IMR-90 (cell line): ENCODE measurements at regions of chr18 and their contacts with region 1.

Region 1: DNA sequence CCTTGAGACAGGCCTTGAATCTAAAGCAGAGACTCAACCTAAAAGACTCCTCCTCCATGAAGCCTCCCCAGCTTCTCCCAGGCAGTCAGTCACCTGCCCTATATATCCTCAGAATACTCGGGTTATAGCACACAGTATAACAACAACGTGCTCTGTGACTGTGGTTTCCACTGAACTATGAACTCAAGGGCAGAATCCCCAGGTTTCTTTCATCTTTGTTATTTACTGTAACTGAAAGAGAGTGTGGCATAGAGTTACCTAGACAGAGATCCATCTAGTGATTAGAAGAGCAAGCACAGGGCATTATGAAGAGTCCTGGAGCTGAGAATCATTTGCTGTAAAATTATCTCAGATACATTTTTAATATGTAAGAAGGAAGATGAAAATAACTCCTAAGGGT is 281.6 kb upstream of the ZNF521 start:
- DNase-seq: no peak
- ATAC-seq: no peak
- H3K4me3 ChIP-seq: no peak overlapping the region
- H3K27ac ChIP-seq: no peak overlapping the region
- H3K4me1 ChIP-seq: no peaks in the 10 kb centered on the region
- H3K27me3 ChIP-seq: no peaks in the 10 kb centered on the region; the same call in 1 of the 2 replicates
- CTCF ChIP-seq: no peak
- POLR2A ChIP-seq: no peak
- RAD21 ChIP-seq: no peak

Region 2: DNA sequence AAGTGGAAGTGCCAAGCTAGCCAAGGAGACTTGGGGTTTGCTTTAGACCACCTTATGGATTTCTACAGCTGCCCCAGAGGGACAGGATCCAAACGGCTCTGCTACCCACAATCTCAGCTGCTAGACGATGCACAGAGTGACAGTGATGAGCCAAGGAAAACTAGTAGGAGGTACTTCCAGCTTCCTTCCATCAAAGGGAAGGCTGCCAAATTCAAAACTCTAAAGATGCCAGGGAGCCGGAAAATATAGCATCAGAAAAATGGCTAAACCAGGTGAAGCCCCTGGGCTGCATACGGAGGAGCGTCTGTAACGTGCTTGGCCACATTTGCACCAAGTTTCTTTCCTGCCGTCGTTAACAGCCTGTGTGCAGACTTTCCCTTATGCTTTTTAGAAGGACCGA is 36.1 kb before region 1 on chr18:
- CTCF ChIA-PET with region 1: no interaction called
- POLR2A ChIA-PET with region 1: no interaction called
- dilution Hi-C with region 1: no loop called
- in situ Hi-C with region 1: no loop called
- intact Hi-C with region 1: loop called (anchors 1 kb)
- DNase-seq: no peak
- ATAC-seq: no peak
- H3K4me3 ChIP-seq: no peak overlapping the region
- H3K27ac ChIP-seq: no peak overlapping the region
- H3K4me1 ChIP-seq: no peaks in the 10 kb centered on the region
- H3K27me3 ChIP-seq: peaks cover 8% of the 10 kb centered on the region
- CTCF ChIP-seq: no peak
- POLR2A ChIP-seq: no peak
- RAD21 ChIP-seq: no peak

Region 3: GRCh38 chr18:25780105-25780504 is 146.5 kb after region 1 on chr18:
- CTCF ChIA-PET with region 1: no interaction called
- POLR2A ChIA-PET with region 1: no interaction called
- dilution Hi-C with region 1: no loop called
- in situ Hi-C with region 1: no loop called
- intact Hi-C with region 1: no loop called
- DNase-seq: no peak
- ATAC-seq: no peak
- H3K4me3 ChIP-seq: no peak overlapping the region
- H3K27ac ChIP-seq: no peak overlapping the region
- H3K4me1 ChIP-seq: no peaks in the 10 kb centered on the region
- H3K27me3 ChIP-seq: peaks cover 2% of the 10 kb centered on the region; the same call in 1 of the 2 replicates
- CTCF ChIP-seq: no peak
- POLR2A ChIP-seq: no peak
- RAD21 ChIP-seq: no peak